ENCODE measurements at regions of chr9 and their contacts with region 1.

Region 1: DNA sequence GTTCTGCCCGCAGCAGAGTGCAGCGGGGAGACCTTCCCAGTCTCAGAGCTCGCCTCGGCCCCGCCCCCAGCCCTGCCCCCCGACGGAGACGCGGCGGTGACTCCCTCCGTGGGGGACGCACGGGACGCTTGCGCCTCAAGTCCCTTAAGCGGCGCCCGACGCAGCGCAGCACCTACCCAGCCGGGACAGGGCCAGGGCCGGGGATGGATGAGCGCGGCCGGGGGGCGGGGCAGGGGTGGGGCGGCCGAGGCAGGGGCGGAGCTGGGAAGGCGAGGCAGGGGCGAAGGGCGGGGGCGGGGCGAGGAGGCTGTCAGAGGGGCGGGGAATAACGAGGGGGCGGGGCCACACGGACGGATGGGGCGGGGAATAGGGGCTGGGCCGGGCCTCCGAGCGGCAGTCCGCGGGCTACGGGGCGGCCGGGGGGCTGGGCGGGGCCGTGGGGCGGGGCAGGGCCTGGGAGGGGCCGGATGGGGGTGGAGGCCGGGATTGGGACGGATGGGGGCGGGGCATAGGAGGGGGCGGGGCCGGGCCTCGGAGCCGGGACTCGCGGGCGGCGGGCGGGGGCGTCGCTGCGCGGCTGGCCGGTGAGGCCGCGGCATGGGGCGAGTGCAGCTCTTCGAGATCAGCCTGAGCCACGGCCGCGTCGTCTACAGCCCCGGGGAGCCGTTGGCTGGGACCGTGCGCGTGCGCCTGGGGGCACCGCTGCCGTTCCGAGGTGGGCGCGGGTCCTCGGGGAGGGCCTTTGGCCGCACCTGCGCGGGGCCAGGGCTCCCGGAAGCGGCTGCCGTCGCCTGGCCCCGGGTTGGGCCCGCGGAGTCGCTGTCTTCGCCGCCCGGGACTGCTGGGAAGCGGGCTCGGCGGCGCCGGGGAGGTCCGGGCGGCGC is at the start of gene ARRDC1:
- DNase-seq: peak; percentile 91
- ATAC-seq: peak; percentile 69
- H3K4me3 ChIP-seq: peak within 1 kb of the TSS; percentile 57 to 81 (median 77)
- H3K27ac ChIP-seq: peak within 1 kb of the TSS; percentile 79
- H3K4me1 ChIP-seq: peaks cover 53% of the 10 kb centered on the region
- H3K27me3 ChIP-seq: peaks cover 1 to 10% of the 10 kb centered on the region in 2 experiments; a peak in 3 of 5 replicates
- CTCF ChIP-seq: peak; percentile 13
- EP300 ChIP-seq: no peak
- POLR2A ChIP-seq: peak in 1 of 2 experiments; percentile 71; a peak in 2 of 4 replicates
- RAD21 ChIP-seq: no peak; the same call in 1 of the 2 replicates
- total RNA-seq, gene ARRDC1: 13.4 and 21.7 TPM in 2 replicates

Region 2: DNA sequence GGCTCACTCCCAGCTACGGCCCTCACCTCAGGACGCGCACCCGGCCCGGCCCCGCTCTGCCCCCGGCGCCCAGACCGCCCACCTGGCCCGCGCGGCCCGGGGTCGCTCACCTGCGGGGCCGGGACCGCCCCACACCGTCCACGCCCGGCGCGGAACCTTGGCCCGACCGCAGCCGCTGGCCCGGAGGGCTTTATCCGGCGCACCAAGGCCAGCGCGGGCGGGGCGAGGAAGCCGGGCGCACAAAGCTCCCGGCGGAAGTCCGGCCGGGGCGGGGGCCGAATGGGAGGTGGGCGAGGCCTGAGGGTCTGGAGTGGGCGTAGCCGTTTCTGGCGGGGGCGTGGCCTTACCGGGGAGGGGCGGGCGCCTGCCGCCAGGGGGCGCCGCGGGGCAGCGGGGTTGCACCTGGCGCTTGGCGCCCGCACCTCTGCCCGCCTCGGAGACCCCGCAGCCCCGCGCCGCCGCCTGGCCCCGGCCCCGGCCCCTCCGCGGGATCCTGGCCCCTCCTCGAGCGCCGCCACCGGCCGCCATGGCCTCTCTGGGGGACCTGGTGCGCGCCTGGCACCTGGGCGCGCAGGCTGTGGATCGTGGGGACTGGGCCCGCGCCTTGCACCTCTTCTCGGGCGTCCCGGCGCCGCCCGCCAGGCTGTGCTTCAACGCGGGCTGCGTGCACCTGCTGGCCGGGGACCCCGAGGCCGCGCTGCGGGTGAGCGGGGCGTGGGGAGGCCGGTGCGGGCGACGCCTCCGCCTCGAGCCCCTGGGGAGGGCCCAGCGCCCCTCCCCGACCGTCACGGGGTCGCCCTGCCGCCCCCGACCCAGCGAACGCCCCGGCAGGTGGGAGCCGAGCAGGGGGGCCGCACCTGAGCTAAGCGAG is 182.1 kb before region 1 on chr9 and contains the starts of genes EXD3 and NOXA1:
- CTCF ChIA-PET with region 1: no interaction called
- POLR2A ChIA-PET with region 1: no interaction called
- in situ Hi-C with region 1: no loop called
- intact Hi-C with region 1: no loop called
- DNase-seq: peak; percentile 81
- ATAC-seq: peak; percentile 81
- H3K4me3 ChIP-seq: peak within 1 kb of the TSS; percentile 69 to 99 (median 96)
- H3K27ac ChIP-seq: peak within 1 kb of the TSS; percentile 69
- H3K4me1 ChIP-seq: peaks cover 21% of the 10 kb centered on the region
- H3K27me3 ChIP-seq: no peaks in the 10 kb centered on the region; a peak in 1 of 5 replicates
- CTCF ChIP-seq: peak; percentile 71
- EP300 ChIP-seq: no peak; a peak in 1 of 4 replicates
- POLR2A ChIP-seq: no peak
- RAD21 ChIP-seq: peak; percentile 87
- total RNA-seq, gene EXD3: 1.3 and 2.7 TPM in 2 replicates
- total RNA-seq, gene NOXA1: 0.63 and 1.2 TPM in 2 replicates

Region 3: GRCh38 chr9:137551651-137552384 is 53.5 kb before region 1 on chr9 and contains the start of gene MRPL41:
- CTCF ChIA-PET with region 1: no interaction called
- POLR2A ChIA-PET with region 1: interaction called, 10 read pairs
- in situ Hi-C with region 1: no loop called
- intact Hi-C with region 1: no loop called
- DNase-seq: peak; percentile 84
- ATAC-seq: peak; percentile 84
- H3K4me3 ChIP-seq: peak within 1 kb of the TSS; percentile 82 to 88 (median 84)
- H3K27ac ChIP-seq: peak within 1 kb of the TSS; percentile 91
- H3K4me1 ChIP-seq: peaks cover 23% of the 10 kb centered on the region
- H3K27me3 ChIP-seq: no peaks in the 10 kb centered on the region
- CTCF ChIP-seq: no peak
- EP300 ChIP-seq: no peak
- POLR2A ChIP-seq: peak; percentile 71 to 72
- RAD21 ChIP-seq: 0 out of 2 replicates have a peak, but pooled peaks have one; percentile 21
- total RNA-seq, gene MRPL41: 48.9 and 54.0 TPM in 2 replicates

Region 4: GRCh38 chr9:137578518-137579258 is 26.7 kb before region 1 on chr9 and contains the start of gene DPH7:
- CTCF ChIA-PET with region 1: no interaction called
- POLR2A ChIA-PET with region 1: interaction called, 6 read pairs
- in situ Hi-C with region 1: no loop called
- intact Hi-C with region 1: loop called (anchors 1 kb)
- DNase-seq: peak; percentile 84
- ATAC-seq: peak; percentile 95
- H3K4me3 ChIP-seq: peak within 1 kb of the TSS; percentile 58 to 98 (median 91)
- H3K27ac ChIP-seq: peak within 1 kb of the TSS; percentile 86
- H3K4me1 ChIP-seq: peaks cover 30% of the 10 kb centered on the region
- H3K27me3 ChIP-seq: no peaks in the 10 kb centered on the region
- CTCF ChIP-seq: peak; percentile 95
- EP300 ChIP-seq: 0 out of 4 replicates have a peak, but pooled peaks of 1 of the 2 experiments have one; percentile 30
- POLR2A ChIP-seq: peak in 1 of 2 experiments; percentile 78
- RAD21 ChIP-seq: peak; percentile 80
- total RNA-seq, gene DPH7: 22.6 and 31.6 TPM in 2 replicates

Region 5: DNA sequence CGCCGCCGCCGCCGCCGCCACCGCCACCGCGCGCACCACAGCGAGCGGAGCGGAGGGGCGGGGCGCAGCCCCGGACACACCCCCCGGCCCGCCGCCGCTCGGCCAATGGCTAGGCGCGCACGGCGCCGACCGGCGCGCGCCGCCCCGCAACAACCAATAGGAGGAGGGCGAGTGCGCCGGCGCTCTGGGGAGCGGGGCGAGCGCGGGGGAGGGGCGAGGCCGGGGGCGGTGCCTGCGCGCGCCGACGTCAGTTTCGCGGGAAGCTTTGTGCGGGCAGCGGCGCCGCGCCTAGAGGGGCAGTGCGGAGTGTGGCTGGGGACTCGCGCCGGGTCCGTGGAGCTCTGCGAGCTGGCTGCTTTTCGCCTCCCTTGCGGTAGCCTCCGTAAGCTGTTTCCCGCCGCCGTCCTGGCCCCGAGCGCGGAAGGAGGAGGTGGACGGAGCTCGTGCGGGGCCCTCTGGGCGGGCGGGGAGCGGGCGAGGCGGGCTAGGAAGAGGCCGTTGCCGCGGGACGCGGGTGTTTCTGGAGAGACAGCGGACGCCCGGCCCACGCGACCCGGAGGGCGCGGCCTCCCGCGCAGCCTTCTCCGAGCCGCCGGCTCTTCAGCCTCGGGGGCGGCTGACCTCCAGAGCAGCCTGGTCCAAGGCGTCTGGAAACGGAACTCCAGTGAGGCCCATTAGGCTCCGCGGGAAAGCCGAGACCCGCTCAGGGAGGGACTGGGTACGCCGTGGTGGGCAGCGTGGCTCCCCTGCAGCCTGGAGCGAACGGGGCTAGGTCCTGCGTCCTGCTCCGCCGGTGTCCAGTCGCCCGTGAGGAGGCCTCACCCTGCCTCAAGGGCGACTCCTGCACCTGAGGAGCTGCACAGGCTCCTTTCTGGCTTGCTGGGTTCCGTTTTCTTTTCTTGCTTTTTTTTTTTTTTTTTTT is 14.6 kb before region 1 on chr9 and contains the start of gene ZMYND19:
- CTCF ChIA-PET with region 1: no interaction called
- POLR2A ChIA-PET with region 1: interaction called, 11 read pairs
- in situ Hi-C with region 1: no loop called
- intact Hi-C with region 1: no loop called
- DNase-seq: peak; percentile 73
- ATAC-seq: peak; percentile 89
- H3K4me3 ChIP-seq: peak within 1 kb of the TSS; percentile 74 to 90 (median 83)
- H3K27ac ChIP-seq: peak within 1 kb of the TSS; percentile 43
- H3K4me1 ChIP-seq: peaks cover 47% of the 10 kb centered on the region
- H3K27me3 ChIP-seq: no peaks in the 10 kb centered on the region
- CTCF ChIP-seq: 0 out of 2 replicates have a peak, but pooled peaks have one; percentile 6
- EP300 ChIP-seq: no peak
- POLR2A ChIP-seq: peak; percentile 59 to 70
- RAD21 ChIP-seq: no peak
- total RNA-seq, gene ZMYND19: 29.6 and 38.7 TPM in 2 replicates

Region 6: DNA sequence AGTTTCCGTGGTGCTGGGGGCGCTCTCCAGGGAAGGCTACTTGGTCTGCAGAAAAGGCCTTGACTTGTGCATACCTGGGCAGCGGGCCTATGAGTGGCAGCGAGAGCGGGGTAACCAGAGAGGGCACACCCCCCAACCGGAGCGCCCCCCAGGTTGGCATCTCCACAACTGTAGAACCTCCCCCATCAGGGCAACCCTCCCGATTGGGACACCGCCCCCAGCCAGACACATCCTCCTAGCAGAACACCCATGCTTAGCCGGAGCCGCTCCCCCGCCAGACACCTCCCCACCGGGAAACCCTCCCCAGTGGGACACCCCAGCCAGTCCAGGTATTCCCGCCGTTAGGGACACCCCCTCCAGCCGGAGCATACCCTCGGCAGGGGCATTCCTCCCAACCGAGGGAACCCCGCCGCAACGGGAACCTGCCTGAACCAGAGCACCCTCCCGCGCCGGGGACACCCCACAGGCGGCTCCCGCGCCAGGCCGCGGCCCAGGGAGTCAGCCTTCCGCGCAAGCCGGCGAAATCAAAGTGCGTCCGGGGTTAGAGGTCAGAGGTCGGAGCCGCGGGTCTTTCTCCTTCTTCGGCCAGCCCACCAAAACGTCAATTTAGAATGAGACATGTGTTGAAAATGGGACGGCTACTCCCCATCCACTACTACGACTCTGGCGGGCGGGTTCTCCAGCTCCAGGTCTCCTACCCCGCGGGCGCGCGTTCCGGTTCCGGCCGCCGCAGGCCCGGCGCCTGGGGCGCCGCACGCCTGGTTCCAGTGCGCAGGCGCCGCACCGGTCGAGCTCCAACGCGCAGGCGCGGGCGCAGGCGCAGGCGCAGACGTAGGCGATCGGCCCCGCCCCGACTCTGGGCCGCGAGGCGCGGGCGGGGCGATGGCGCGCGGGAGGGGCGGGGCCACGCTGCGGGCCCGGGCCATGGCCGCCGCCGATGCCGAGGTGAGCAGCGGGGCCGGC is 13.0 kb after region 1 on chr9 and contains the start of gene EHMT1:
- CTCF ChIA-PET with region 1: no interaction called
- POLR2A ChIA-PET with region 1: interaction called, 25 read pairs
- in situ Hi-C with region 1: no loop called
- intact Hi-C with region 1: no loop called
- DNase-seq: peak; percentile 67
- ATAC-seq: peak; percentile 76
- H3K4me3 ChIP-seq: peak within 1 kb of the TSS; percentile 90 to 99 (median 96)
- H3K27ac ChIP-seq: peak within 1 kb of the TSS; percentile 85
- H3K4me1 ChIP-seq: peaks cover 38% of the 10 kb centered on the region
- H3K27me3 ChIP-seq: no peaks in the 10 kb centered on the region; a peak in 1 of 5 replicates
- CTCF ChIP-seq: peak; percentile 37; the same call in 1 of the 2 replicates
- EP300 ChIP-seq: 0 out of 4 replicates have a peak, but pooled peaks of 1 of the 2 experiments have one; percentile 24
- POLR2A ChIP-seq: peak in 1 of 2 experiments; percentile 68; a peak in 2 of 4 replicates
- RAD21 ChIP-seq: peak; percentile 47
- total RNA-seq, gene EHMT1: 19.2 and 23.0 TPM in 2 replicates

Region 7: DNA sequence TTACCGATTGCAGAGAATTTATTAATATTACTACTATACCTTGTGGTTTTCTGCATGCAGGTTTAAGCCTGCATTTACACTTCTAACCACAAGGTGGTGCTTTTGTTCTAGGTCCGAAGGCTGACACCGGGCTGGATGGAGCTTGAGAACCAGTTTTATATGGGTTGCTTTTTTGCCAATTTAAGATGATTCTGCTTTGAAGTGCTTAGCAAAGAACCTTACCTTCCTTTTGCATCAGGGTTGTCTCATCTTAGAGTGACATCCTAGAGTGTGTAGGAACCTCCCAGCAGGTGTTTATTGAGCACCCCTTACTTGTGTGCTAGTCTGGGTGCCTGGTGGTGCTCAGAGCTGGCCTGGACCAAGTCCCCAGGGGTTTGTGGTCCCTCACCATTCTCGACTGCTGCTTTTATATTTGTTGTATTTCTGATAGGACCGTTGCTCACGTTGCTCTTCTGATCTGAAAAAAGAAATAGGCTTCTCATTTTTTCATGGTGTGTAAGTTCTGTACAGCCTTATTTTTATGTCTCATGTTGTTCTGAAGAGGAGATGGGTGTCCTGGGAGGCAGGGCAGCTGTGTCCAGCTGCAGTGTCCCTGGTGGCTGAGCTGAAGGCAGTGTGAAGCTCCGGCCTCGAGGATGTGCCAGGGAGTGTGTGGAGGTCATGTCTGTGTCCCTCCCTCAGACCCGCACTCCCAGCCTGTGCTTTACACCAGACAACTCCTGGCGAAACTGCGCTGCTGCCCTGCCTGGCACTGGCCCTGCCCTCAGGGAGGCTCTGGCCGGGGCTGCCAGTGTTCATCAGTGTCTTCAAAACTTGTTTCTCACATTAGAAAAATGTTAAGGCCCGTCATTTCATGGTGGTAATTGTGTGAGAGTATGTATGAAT is 67.8 kb after region 1 on chr9:
- CTCF ChIA-PET with region 1: no interaction called
- POLR2A ChIA-PET with region 1: no interaction called
- in situ Hi-C with region 1: no loop called
- intact Hi-C with region 1: loop called (anchors 5 kb)
- DNase-seq: peak; percentile 44
- ATAC-seq: no peak
- H3K4me3 ChIP-seq: no peak overlapping the region
- H3K27ac ChIP-seq: no peak overlapping the region
- H3K4me1 ChIP-seq: peaks cover 51% of the 10 kb centered on the region
- H3K27me3 ChIP-seq: no peaks in the 10 kb centered on the region
- CTCF ChIP-seq: peak; percentile 79
- EP300 ChIP-seq: no peak
- POLR2A ChIP-seq: no peak
- RAD21 ChIP-seq: peak; percentile 61